AG04450 (cell line): ENCODE measurements at regions of chr7 and their contacts with region 1.

Region 1: DNA sequence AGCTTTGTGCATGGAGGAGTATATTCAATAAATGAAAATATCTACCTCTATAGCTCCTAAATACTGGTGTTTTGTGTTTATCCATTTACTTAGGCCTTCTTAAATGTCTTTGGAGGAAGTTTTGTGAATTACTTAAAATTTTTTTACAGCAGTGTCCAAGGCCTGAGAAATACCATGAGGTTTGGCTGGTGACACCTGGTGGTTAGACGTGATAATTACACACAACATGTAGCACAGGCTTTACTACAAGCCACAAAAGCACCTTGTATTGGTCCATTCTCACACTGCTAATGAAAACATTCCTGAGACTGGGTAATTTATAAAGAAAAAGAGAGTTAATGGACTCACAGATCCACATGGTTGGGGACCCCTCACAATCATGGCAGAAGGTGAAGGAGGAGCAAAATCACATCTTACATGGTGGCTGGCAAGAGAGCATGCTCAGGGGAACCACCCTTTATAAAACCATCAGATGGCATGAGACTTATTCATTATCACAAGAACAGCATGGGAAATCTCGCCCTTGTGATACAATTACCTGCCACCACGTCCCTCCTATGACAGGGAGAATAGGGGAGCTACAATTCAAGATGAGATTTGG is 20.6 kb downstream of the HYAL4 start:
- DNase-seq: peak; percentile 38
- H3K4me3 ChIP-seq: no peak overlapping the region
- H3K27ac ChIP-seq: no peak overlapping the region
- H3K27me3 ChIP-seq: peaks cover 2% of the 10 kb centered on the region
- CTCF ChIP-seq: peak; percentile 70

Region 2: GRCh38 chr7:123580406-123581161 is 285.0 kb before region 1 on chr7:
- CTCF ChIA-PET with region 1: interaction called, 20 read pairs
- POLR2A ChIA-PET with region 1: no interaction called
- DNase-seq: no peak
- H3K4me3 ChIP-seq: no peak overlapping the region
- H3K27ac ChIP-seq: no peak overlapping the region
- H3K27me3 ChIP-seq: no peaks in the 10 kb centered on the region
- CTCF ChIP-seq: peak; percentile 82

Region 3: DNA sequence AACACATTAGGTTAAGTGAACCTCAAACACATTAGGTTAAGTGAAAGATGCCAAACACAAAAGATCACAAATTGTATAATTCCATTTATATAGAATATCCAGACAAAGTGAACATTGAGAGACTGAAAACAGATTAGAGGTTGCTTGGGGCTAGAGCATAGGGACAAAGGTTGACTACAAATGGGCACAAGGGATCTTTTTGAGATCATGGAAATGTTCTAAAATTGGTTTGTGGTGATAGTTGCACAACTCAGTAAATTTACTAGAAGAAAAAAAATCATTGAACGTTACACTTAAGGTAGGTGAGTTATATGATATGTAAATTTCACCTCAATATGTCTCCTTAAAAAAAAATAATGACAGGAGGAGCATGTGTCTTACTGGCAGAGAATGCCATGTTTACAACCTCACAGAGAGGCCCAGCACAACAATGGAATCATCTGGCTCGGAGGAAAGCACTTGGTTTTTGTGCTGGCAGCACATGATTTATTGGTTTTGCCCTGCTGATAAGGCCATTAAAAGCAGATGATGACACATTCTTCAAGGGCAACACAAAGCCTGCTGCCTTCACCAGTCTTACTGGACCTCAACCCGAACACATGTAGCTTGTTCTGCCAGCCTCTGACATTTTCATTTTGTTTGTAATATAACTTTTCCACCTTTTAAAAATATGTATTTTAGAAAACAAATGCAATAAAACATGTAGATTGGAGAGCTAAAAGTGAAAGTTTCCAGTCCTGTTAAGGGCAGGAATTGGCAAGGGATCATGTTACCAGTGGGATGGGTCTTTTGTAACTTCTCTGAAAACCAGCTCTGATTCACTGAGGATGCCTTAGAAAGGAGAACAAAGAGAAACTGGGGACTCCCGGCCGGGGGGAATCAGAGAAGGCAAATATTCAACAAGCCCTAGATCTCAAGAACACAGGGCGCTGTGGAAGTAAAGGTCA is 221.8 kb before region 1 on chr7:
- CTCF ChIA-PET with region 1: interaction called, 78 read pairs
- POLR2A ChIA-PET with region 1: no interaction called
- DNase-seq: no peak
- H3K4me3 ChIP-seq: peak overlapping the region; percentile 8
- H3K27ac ChIP-seq: no peak overlapping the region
- H3K27me3 ChIP-seq: peaks cover 2% of the 10 kb centered on the region
- CTCF ChIP-seq: no peak

Region 4: GRCh38 chr7:123692471-123692877 is 173.1 kb before region 1 on chr7:
- CTCF ChIA-PET with region 1: interaction called, 11 read pairs
- POLR2A ChIA-PET with region 1: no interaction called
- DNase-seq: no peak
- H3K4me3 ChIP-seq: no peak overlapping the region
- H3K27ac ChIP-seq: no peak overlapping the region
- H3K27me3 ChIP-seq: no peaks in the 10 kb centered on the region
- CTCF ChIP-seq: no peak

Region 5: GRCh38 chr7:123888192-123888591 is 22.6 kb after region 1 on chr7:
- CTCF ChIA-PET with region 1: interaction called, 11 read pairs
- POLR2A ChIA-PET with region 1: no interaction called
- DNase-seq: no peak
- H3K4me3 ChIP-seq: no peak overlapping the region
- H3K27ac ChIP-seq: no peak overlapping the region
- H3K27me3 ChIP-seq: no peaks in the 10 kb centered on the region
- CTCF ChIP-seq: no peak

Region 6: GRCh38 chr7:123961731-123962130 is 96.1 kb after region 1 on chr7:
- CTCF ChIA-PET with region 1: no interaction called
- POLR2A ChIA-PET with region 1: no interaction called
- DNase-seq: no peak
- H3K4me3 ChIP-seq: no peak overlapping the region
- H3K27ac ChIP-seq: no peak overlapping the region
- H3K27me3 ChIP-seq: no peaks in the 10 kb centered on the region
- CTCF ChIP-seq: no peak